ENCODE measurements at regions of chr7 and their contacts with region 1.

Region 1: DNA sequence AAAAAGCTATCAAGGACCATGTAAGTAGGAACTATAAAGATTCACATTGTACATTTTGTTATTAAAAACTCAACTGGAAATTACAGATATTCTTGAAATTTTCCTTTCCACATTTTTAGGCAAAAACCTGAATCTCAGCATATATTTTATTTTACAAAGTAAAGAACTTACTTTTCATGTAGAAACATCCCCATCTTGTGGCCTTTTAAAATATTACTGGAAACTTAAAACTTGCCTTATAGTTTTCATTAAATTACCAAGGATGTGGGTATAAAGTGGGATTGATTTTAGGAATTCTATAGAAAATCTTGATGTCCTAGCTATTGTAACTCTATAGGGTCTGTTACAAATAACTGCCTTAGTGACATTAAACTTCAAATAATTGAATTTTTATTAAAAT is 10.6 kb downstream of the DBF4 start:
- DNase-seq: no peak
- H3K4me3 ChIP-seq: no peak overlapping the region
- H3K27me3 ChIP-seq: no peaks in the 10 kb centered on the region
- CTCF ChIP-seq: peak; percentile 30

Region 2: DNA sequence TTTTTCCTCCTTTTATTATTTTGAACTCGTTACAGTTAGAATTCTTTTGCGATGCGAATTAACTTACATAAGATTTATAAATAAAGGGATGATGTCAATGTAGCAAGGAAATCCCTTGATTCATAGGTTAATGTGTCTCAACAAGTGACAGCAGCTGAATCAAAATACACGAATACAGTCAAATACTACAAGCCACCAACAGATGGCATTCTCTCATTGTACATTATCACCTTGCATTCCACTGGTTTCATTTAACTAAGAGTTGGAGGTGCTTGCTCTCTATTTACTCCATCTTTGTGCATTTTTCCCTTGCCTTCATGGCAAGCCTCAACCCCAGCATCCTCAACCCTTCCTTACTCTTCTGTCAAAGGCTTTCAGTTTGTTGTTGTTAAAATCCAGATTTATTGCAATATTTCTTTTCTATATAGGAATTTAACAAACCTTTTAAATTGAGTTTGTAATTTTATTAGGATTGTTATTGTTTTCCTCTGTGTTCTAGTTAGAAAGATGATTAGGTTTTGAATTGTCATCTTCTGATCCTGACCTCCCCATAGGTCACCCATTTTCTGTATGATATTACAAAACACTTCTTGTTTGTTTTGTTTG is 89.0 kb before region 1 on chr7:
- CTCF ChIA-PET with region 1: interaction called, 17 read pairs
- POLR2A ChIA-PET with region 1: no interaction called
- DNase-seq: no peak
- H3K4me3 ChIP-seq: no peak overlapping the region
- H3K27me3 ChIP-seq: no peaks in the 10 kb centered on the region
- CTCF ChIP-seq: peak; percentile 58

Measured in BJ (cell line).